Activated T-helper 1 cell treated with anti-CD3 and anti-CD28 coated beads, Interleukin-12 subunit alpha, Interleukin-12 subunit beta, Interleukin-2, Interleukin-4 antibody, amounts not matched to agents 30 ng/mL and 10 ng/mL and 1 ng/mL, durations not matched to agents 14 hours and 24 hours and 36 hours (primary cell): ENCODE measurements at regions of chr2 and their contacts with region 1.

Region 1: DNA sequence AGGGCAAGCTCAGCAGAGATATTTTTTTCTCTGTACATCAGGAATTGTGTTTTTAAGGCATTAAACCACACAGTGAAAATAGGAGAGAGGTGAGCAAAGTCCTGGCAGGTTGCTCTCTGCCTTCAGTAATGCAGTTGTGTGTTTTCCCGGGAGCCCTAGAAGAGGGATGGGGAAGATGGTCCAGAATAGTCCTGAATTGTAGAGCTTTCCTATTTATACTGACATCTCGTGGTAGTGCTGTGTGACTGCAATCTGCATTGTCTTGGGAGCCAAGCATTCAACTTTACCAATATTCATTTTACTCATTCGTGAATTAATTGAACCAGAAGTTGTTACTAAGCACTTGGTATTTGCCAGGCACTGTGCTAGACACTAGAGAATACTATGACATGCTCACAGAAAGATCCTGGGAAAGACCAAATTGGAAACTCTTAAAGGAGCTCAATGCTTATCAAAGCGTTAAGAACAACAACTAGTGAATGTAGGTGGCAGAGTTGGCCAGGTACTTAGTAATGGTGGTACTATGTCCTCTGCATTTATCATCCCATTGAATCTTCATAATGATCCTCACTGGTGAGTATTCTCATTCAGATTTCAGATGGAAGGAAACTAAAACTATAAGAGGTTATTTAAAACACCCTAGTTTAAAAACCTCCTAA is 214.6 kb downstream of the TRIB2 start:
- DNase-seq: no peak
- H3K4me3 Mint-ChIP-seq: no peak overlapping the region
- H3K27ac Mint-ChIP-seq: no peak overlapping the region
- H3K4me1 Mint-ChIP-seq: peaks cover 10% of the 10 kb centered on the region
- H3K27me3 Mint-ChIP-seq: peaks cover 41% of the 10 kb centered on the region

Region 2: GRCh38 chr2:11174222-11174621 is 1757.1 kb before region 1 on chr2:
- intact Hi-C with region 1: loop called (anchors 5 kb)
- DNase-seq: no peak
- H3K4me3 Mint-ChIP-seq: no peak overlapping the region
- H3K27ac Mint-ChIP-seq: no peak overlapping the region
- H3K4me1 Mint-ChIP-seq: peaks cover 13% of the 10 kb centered on the region
- H3K27me3 Mint-ChIP-seq: no peaks in the 10 kb centered on the region

Region 3: DNA sequence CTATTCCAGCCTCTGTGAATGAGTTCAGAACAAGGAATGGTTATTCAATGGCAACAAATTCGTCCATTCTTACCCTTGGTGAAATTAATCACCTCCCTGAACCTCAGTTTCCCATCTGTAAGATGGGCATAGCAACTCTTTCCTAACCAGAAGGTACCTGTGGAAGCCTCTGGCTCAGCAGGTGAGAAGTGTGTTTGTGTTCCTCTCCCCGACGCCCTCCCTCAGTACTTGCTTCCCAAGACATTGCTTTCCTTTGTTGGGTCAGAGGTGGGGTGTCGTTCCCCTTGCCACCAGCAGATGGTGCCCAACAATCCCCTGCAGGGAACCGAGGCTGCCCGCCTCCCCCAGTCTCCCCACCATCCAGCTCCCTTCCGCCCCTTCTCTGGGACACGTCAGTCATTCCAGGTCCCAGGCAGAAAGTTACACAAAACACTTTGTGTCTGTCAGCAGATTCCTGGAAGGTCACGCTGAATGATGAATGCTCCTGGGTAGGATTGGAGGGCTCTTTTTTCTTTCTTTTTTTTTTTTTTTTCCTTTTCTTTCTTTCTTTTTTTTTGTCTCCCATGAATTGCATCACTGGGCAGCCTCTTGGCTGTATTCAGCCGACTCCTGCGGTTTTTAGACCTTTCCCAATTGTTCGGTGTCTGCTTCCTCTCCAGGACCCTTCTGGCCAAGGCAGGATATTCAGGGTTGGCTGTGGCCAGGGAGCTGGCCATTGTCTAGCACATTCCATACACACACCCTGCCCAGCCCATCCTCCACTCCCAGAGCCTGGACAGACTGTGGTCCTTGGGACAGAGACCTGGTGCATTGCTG is 1067.6 kb before region 1 on chr2:
- intact Hi-C with region 1: loop called (anchors 1 kb)
- DNase-seq: peak; percentile 22
- H3K4me3 Mint-ChIP-seq: no peak overlapping the region
- H3K27ac Mint-ChIP-seq: no peak overlapping the region
- H3K4me1 Mint-ChIP-seq: peaks cover 9% of the 10 kb centered on the region
- H3K27me3 Mint-ChIP-seq: peaks cover 19% of the 10 kb centered on the region

Region 4: GRCh38 chr2:12754643-12755042 is 176.7 kb before region 1 on chr2:
- intact Hi-C with region 1: no loop called
- DNase-seq: no peak
- H3K4me3 Mint-ChIP-seq: no peak overlapping the region
- H3K27ac Mint-ChIP-seq: no peak overlapping the region
- H3K4me1 Mint-ChIP-seq: no peaks in the 10 kb centered on the region
- H3K27me3 Mint-ChIP-seq: peaks cover 21% of the 10 kb centered on the region

Region 5: GRCh38 chr2:12856934-12857601 is 74.2 kb before region 1 on chr2:
- intact Hi-C with region 1: loop called (anchors 2 kb)
- DNase-seq: peak; percentile 26
- H3K4me3 Mint-ChIP-seq: no peak overlapping the region
- H3K27ac Mint-ChIP-seq: no peak overlapping the region
- H3K4me1 Mint-ChIP-seq: peaks cover 18% of the 10 kb centered on the region
- H3K27me3 Mint-ChIP-seq: no peaks in the 10 kb centered on the region